A549 (cell line): ENCODE measurements at regions of chr17 and their contacts with region 1.

Region 1: GRCh38 chr17:44170499-44171201 is at the start of gene ASB16:
- DNase-seq: no peak
- ATAC-seq: peak; percentile 9 to 11; a peak in 4 of 6 replicates
- H3K4me3 ChIP-seq: no peak within 1 kb of the TSS
- H3K27ac ChIP-seq: peak within 1 kb of the TSS in 1 of 2 experiments; percentile 1; a peak in 2 of 6 replicates
- H3K4me1 ChIP-seq: peaks cover 16% of the 10 kb centered on the region
- CTCF ChIP-seq: no peak
- EP300 ChIP-seq: no peak
- POLR2A ChIP-seq: no peak
- RAD21 ChIP-seq: no peak
- polyA plus RNA-seq, gene ASB16: 0.05 TPM in 1 of 2 replicates, not detected in the other

Region 2: DNA sequence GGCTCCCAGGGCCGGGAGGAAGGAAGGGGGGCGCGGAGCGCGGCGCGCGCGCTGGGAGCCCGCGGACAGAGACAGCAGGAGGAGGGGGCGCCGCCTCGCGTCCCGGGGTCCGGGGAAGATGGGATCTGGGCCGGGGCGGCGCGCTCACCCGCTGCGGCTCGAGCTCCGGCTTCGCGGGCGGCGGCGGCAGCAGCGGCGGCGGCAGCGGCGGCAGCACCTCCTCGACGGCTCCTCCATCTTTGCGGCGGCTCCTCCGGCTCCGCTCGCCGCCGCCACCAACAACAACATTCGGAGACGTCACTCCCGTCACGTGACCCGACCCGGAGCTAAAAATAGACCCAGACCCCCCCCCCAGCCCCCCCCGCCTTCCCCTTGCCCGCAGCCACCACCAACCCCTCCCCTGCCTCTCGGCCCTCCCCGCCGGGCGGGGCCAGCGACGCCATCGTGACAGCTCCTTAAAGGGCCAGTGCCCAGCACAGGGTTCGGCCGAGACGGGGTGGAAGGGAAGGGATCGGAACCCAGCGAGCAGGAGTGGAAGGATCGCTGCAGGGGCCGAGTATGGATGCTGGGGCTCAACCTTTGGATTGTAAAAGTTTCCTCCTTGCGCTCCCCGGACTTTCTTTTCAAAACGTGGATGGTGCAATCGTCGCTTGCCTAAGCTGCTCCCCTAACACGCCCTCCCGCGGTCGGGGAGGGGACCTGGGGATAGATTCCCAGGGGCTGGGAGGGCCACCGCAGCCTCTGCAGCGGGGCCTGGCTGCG is 47.1 kb before region 1 on chr17 and contains the start of gene HDAC5:
- CTCF ChIA-PET with region 1: interaction called, 14 read pairs
- POLR2A ChIA-PET with region 1: interaction called, 6 read pairs
- DNase-seq: peak; percentile 92 to 96
- ATAC-seq: peak; percentile 84 to 92
- H3K4me3 ChIP-seq: peak within 1 kb of the TSS; percentile 81
- H3K27ac ChIP-seq: peak within 1 kb of the TSS; percentile 87 to 93
- H3K4me1 ChIP-seq: peaks cover 28% of the 10 kb centered on the region
- CTCF ChIP-seq: peak; percentile 68
- EP300 ChIP-seq: no peak
- POLR2A ChIP-seq: peak; percentile 60
- RAD21 ChIP-seq: peak; percentile 53 to 63
- polyA plus RNA-seq, gene HDAC5: 3.1 and 5.7 TPM in 2 replicates

Region 3: GRCh38 chr17:44141717-44142285 is 28.8 kb before region 1 on chr17 and contains the start of gene HROB:
- CTCF ChIA-PET with region 1: interaction called, 159 read pairs
- POLR2A ChIA-PET with region 1: no interaction called
- DNase-seq: peak; percentile 94 to 99
- ATAC-seq: peak; percentile 74 to 83
- H3K4me3 ChIP-seq: peak within 1 kb of the TSS; percentile 88
- H3K27ac ChIP-seq: peak within 1 kb of the TSS; percentile 83 to 93
- H3K4me1 ChIP-seq: peaks cover 32% of the 10 kb centered on the region
- CTCF ChIP-seq: peak; percentile 92
- EP300 ChIP-seq: no peak
- POLR2A ChIP-seq: no peak
- RAD21 ChIP-seq: peak; percentile 62 to 70
- polyA plus RNA-seq, gene HROB: 5.4 and 5.6 TPM in 2 replicates

Region 4: GRCh38 chr17:44159519-44160210 is 11.0 kb before region 1 on chr17:
- CTCF ChIA-PET with region 1: interaction called, 88 read pairs
- POLR2A ChIA-PET with region 1: interaction called, 3 read pairs
- DNase-seq: no peak
- ATAC-seq: no peak
- H3K4me3 ChIP-seq: no peak overlapping the region
- H3K27ac ChIP-seq: no peak overlapping the region
- H3K4me1 ChIP-seq: no peaks in the 10 kb centered on the region
- CTCF ChIP-seq: no peak
- EP300 ChIP-seq: no peak
- POLR2A ChIP-seq: no peak
- RAD21 ChIP-seq: no peak

Region 5: GRCh38 chr17:44186307-44187130 is 15.9 kb after region 1 on chr17 and contains the start of gene TMUB2:
- CTCF ChIA-PET with region 1: interaction called, 58 read pairs
- POLR2A ChIA-PET with region 1: interaction called, 7 read pairs
- DNase-seq: peak; percentile 100
- ATAC-seq: peak; percentile 85 to 88
- H3K4me3 ChIP-seq: peak within 1 kb of the TSS; percentile 87
- H3K27ac ChIP-seq: peak within 1 kb of the TSS; percentile 92 to 97
- H3K4me1 ChIP-seq: peaks cover 24% of the 10 kb centered on the region
- CTCF ChIP-seq: no peak
- EP300 ChIP-seq: no peak
- POLR2A ChIP-seq: peak; percentile 98
- RAD21 ChIP-seq: no peak
- polyA plus RNA-seq, gene TMUB2: 36.2 and 43.3 TPM in 2 replicates

Region 6: DNA sequence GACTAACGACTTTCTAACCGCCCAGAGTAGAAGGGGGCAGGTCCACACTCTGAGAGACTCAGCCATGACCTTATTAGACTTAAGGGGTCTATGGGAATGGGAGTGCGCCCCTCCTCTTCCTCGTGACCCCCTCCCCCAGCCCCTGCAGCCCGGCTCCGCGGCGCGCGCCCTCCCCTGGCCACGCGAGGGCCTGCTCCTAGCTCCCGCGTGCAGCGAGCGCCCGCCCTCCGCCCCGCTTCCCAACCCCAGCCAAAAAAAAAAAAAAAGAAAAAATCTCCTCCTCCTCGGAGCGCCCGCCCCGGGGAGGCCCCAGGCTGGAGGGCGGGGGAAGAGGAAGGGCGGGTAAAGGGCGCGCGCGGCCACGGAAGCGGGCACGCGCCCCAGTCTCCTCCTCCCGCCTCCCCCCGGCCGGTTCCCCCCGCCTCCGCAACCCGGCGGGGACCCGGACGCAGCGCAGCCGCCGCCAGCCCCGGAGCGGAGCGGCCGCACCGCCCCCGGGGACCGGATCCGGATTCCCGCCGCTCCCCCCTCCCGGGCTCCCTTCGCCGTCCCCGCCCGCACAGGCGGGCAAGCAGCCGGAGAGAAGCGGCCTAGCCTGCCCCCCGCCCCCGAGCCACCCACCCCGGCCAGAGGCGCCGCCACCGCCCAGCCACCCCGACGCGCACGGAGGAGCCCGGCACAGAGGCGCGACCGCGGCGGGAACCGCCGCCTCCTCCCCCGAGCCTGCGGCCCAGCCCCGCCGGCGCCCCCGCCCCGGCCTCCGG is 47.9 kb after region 1 on chr17:
- CTCF ChIA-PET with region 1: no interaction called
- POLR2A ChIA-PET with region 1: no interaction called
- DNase-seq: peak; percentile 75 to 93
- ATAC-seq: peak; percentile 10 to 38
- H3K4me3 ChIP-seq: peak overlapping the region; percentile 89
- H3K27ac ChIP-seq: peak overlapping the region; percentile 97 to 99
- H3K4me1 ChIP-seq: peaks cover 25% of the 10 kb centered on the region
- CTCF ChIP-seq: peak; percentile 67
- EP300 ChIP-seq: no peak
- POLR2A ChIP-seq: 0 out of 2 replicates have a peak, but pooled peaks have one; percentile 23
- RAD21 ChIP-seq: no peak; a peak in 2 of 5 replicates

Region 7: GRCh38 chr17:44304651-44305050 is 134.0 kb after region 1 on chr17:
- CTCF ChIA-PET with region 1: no interaction called
- POLR2A ChIA-PET with region 1: no interaction called
- DNase-seq: no peak
- ATAC-seq: no peak
- H3K4me3 ChIP-seq: no peak overlapping the region
- H3K27ac ChIP-seq: no peak overlapping the region
- H3K4me1 ChIP-seq: peaks cover 15% of the 10 kb centered on the region
- CTCF ChIP-seq: no peak
- EP300 ChIP-seq: no peak
- POLR2A ChIP-seq: no peak
- RAD21 ChIP-seq: no peak